ENCODE measurements at regions of chr6 and their contacts with region 1.

Region 1: GRCh38 chr6:42879372-42880239 is at the start of gene RPL7L1:
- DNase-seq: peak; percentile 70 to 93 (median 88)
- ATAC-seq: peak; percentile 95
- H3K4me3 ChIP-seq: peak within 1 kb of the TSS; percentile 82
- H3K4me3 Mint-ChIP-seq: peak within 1 kb of the TSS; percentile 93 to 99 (median 96)
- H3K27ac ChIP-seq: peak within 1 kb of the TSS; percentile 89
- H3K27ac Mint-ChIP-seq: peak within 1 kb of the TSS; percentile 98 to 100 (median 99)
- H3K4me1 ChIP-seq: peaks cover 5 to 7% of the 10 kb centered on the region in 2 donors
- H3K4me1 Mint-ChIP-seq: peaks cover 7 to 40% (median 29%) of the 10 kb centered on the region in 7 donors
- H3K27me3 ChIP-seq: no peaks in the 10 kb centered on the region
- H3K27me3 Mint-ChIP-seq: no peaks in the 10 kb centered on the region
- total RNA-seq, gene RPL7L1: 65.6 to 91.7 (median 78.1) TPM

Region 2: GRCh38 chr6:42661540-42662153 is 218.0 kb before region 1 on chr6:
- CTCF ChIA-PET with region 1: interaction called, 50 read pairs
- POLR2A ChIA-PET with region 1: interaction called, 9 read pairs
- intact Hi-C with region 1: loop called (anchors 1 kb)
- DNase-seq: peak; percentile 73 to 89 (median 81)
- ATAC-seq: peak; percentile 99
- H3K4me3 ChIP-seq: no peak overlapping the region
- H3K4me3 Mint-ChIP-seq: no peak overlapping the region
- H3K27ac ChIP-seq: no peak overlapping the region
- H3K27ac Mint-ChIP-seq: peak overlapping the region in 8 of 9 donors; percentile 0 to 59 (median 26)
- H3K4me1 ChIP-seq: no peaks in the 10 kb centered on the region
- H3K4me1 Mint-ChIP-seq: peaks cover 0 to 6% (median 0%) of the 10 kb centered on the region in 7 donors
- H3K27me3 ChIP-seq: no peaks in the 10 kb centered on the region
- H3K27me3 Mint-ChIP-seq: no peaks in the 10 kb centered on the region

Region 3: GRCh38 chr6:42726485-42727086 is 153.0 kb before region 1 on chr6:
- CTCF ChIA-PET with region 1: interaction called, 3 read pairs
- POLR2A ChIA-PET with region 1: interaction called, 16 read pairs
- intact Hi-C with region 1: loop called (anchors 1 kb)
- DNase-seq: peak; percentile 20 to 87 (median 80)
- ATAC-seq: peak; percentile 99
- H3K4me3 ChIP-seq: peak overlapping the region; percentile 84
- H3K4me3 Mint-ChIP-seq: peak overlapping the region; percentile 76 to 96 (median 90)
- H3K27ac ChIP-seq: peak overlapping the region; percentile 74
- H3K27ac Mint-ChIP-seq: peak overlapping the region; percentile 89 to 99 (median 98)
- H3K4me1 ChIP-seq: peaks cover 6 to 14% of the 10 kb centered on the region in 2 donors
- H3K4me1 Mint-ChIP-seq: peaks cover 9 to 25% (median 20%) of the 10 kb centered on the region in 7 donors
- H3K27me3 ChIP-seq: no peaks in the 10 kb centered on the region
- H3K27me3 Mint-ChIP-seq: peaks cover 0 to 1% (median 0%) of the 10 kb centered on the region in 5 donors

Region 4: DNA sequence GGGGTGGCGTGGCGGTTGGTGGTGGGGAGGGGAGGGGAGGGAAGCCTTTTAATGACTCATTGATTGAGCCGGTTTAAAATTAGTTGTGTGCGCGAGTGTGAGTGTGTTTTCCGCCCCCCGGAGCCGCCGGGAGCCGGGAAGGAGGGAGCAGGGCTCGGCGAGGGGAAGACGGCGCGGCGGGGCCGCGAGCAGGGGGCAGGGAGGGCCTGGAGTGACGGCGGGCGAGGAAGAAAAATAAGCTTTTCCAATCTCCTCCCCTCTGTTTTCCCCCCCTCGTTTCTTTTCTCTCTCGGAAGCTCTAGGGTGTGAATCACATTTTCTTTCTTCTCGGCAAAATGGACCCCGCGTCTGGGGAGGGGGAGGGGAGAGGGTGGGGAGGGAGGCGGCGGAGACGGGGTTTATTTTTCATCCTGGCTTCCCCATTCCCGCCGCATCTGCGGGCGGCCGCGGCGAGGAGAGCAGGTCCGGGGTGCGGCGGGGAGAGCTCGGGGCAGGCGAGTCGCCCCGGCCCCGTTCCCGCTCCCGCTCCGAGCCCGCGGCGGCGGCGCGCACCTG is 96.9 kb before region 1 on chr6:
- CTCF ChIA-PET with region 1: interaction called, 3 read pairs
- POLR2A ChIA-PET with region 1: interaction called, 45 read pairs
- intact Hi-C with region 1: loop called (anchors 1 kb)
- DNase-seq: peak in 8 of 9 donors; percentile 65 to 88 (median 82)
- ATAC-seq: peak; percentile 75
- H3K4me3 ChIP-seq: peak overlapping the region; percentile 89
- H3K4me3 Mint-ChIP-seq: peak overlapping the region in 8 of 10 donors; percentile 89 to 100 (median 98)
- H3K27ac ChIP-seq: peak overlapping the region; percentile 100
- H3K27ac Mint-ChIP-seq: peak overlapping the region in 5 of 9 donors; percentile 99 to 100 (median 100)
- H3K4me1 ChIP-seq: peaks cover 36 to 45% of the 10 kb centered on the region in 2 donors
- H3K4me1 Mint-ChIP-seq: peaks cover under 1 to 35% (median 30%) of the 10 kb centered on the region in 7 donors
- H3K27me3 ChIP-seq: no peaks in the 10 kb centered on the region
- H3K27me3 Mint-ChIP-seq: no peaks in the 10 kb centered on the region

Region 5: DNA sequence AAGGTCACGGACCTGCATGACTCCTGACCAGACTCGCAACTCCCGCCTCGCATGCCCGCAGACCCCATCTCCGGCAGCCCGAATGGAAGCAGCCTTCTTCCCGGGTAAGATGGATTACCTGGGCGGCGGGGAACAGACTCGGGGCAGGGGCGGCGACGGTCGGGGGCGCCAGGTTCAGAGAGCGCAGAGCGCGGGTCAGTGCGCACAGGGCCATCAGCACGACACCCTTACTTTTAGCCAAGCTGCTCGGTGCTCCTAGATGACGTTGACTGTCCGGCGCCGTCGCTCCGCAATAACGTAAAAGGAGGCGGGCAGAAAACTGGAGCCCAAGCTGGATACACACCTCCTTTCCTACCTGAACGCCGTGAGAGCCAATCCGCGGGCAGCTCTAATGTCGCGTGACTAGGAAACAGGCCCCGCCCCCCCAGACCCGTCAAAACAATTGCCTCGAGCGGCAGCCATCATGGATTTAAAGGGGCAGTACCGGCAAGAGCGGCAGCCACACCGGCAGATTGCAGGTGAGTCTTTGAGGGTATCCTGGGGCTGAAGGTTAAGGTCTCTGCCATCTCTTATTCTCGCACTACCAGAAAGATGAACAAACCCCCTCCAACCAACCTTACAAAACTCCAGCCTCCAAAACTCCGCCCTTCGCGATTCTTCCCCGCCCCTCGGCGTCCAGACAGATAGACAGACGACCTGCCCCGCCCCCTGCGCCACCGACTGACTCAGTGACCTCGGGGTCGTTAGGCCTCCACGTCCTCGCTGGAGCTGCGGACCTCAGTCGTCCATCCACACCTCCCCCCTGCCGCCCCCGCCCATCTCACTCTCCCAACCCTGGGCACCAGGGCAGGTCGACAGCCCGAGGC is 179.8 kb after region 1 on chr6 and contains the starts of genes KLC4 and MRPL2:
- CTCF ChIA-PET with region 1: no interaction called
- POLR2A ChIA-PET with region 1: interaction called, 4 read pairs
- intact Hi-C with region 1: loop called in 1 of 2 experiments (anchors 1 kb)
- DNase-seq: peak; percentile 79 to 98 (median 95)
- ATAC-seq: peak; percentile 99
- H3K4me3 ChIP-seq: peak within 1 kb of the TSS; percentile 80
- H3K4me3 Mint-ChIP-seq: peak within 1 kb of the TSS; percentile 88 to 100 (median 96)
- H3K27ac ChIP-seq: peak within 1 kb of the TSS; percentile 88
- H3K27ac Mint-ChIP-seq: peak within 1 kb of the TSS; percentile 95 to 100 (median 99)
- H3K4me1 ChIP-seq: peaks cover 0 to 21% of the 10 kb centered on the region in 2 donors
- H3K4me1 Mint-ChIP-seq: peaks cover 28 to 50% (median 45%) of the 10 kb centered on the region in 7 donors
- H3K27me3 ChIP-seq: no peaks in the 10 kb centered on the region
- H3K27me3 Mint-ChIP-seq: no peaks in the 10 kb centered on the region
- total RNA-seq, gene KLC4: 16.5 to 56.9 (median 42.5) TPM
- total RNA-seq, gene MRPL2: 32.0 to 57.5 (median 47.7) TPM